ENCODE measurements at regions of chr7 and their contacts with region 1.

Region 1: DNA sequence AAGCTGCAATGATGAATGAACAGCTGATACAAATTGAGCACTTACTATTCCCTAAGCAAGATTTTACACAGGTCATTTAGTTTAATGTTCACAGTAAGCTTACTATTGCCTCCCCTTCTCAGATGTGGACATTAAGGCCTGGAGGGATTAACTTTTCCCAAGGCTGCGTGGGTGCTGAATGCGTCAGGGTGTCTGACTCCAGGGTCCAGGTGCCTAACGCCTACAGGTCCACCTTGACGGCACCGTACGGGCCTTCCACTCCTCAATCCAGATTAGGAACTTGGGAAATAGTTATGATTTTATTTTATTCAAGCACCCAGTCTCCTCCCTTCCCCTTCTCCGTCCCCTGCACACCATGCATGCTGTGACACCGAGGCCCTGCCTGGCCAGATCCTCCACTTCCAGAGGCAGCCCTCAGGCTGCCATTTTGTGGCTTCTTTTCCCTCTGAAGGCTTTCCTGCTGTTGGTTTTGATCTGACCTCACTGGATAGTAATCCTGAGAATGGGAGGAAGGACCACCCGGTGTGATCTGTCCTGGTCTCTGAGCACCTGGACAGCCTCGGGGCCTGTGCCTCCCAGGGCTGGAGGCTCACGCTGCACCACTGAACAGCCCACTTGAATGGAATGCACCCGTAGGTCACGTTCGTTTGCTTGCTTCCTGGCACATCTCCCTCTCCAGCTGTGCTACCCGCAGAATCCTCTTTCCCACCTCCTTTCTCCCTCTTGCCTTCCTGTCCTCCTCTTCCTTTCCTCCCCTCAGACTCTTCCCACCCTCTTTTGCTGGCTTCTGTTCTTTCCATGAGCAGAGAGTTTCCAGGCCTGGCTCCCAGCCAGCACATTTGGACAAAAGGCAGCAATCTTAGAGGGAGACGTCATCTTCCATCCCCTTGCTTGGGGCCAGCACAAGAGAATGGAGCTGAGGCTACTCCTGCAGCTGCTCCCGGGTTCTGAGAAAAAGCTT is 14.4 kb downstream of the DENND2A start:
- DNase-seq: peak; percentile 90
- H3K4me3 ChIP-seq: no peak overlapping the region
- H3K27ac ChIP-seq: peak overlapping the region; percentile 37
- H3K4me1 ChIP-seq: peaks cover 24% of the 10 kb centered on the region
- H3K27me3 ChIP-seq: no peaks in the 10 kb centered on the region
- CTCF ChIP-seq: no peak

Region 2: DNA sequence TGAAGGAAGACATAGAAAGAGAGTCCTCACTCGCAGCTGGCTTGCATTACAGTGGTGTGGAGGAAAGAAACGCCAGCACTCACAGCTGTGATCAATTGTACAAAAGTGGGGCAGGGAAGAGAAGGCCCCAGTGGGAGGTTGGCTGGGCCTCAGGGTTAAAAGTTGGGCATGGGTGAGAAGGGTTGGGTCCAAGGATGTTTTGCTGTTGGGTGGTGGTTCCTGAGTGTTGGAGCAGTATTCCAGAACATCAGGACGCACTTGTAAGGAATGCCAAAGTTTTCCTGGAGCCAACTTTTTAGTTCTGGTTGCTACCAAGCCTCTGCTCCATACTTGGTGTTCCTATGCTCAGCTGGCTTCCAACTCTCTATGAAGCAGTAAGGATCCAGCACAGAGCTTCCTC is 91.4 kb before region 1 on chr7:
- CTCF ChIA-PET with region 1: no interaction called
- dilution Hi-C with region 1: loop called (anchors 5 kb)
- in situ Hi-C with region 1: no loop called
- intact Hi-C with region 1: no loop called
- DNase-seq: no peak
- H3K4me3 ChIP-seq: no peak overlapping the region
- H3K27ac ChIP-seq: no peak overlapping the region
- H3K4me1 ChIP-seq: peaks cover 4% of the 10 kb centered on the region
- H3K27me3 ChIP-seq: no peaks in the 10 kb centered on the region
- CTCF ChIP-seq: no peak

Region 3: DNA sequence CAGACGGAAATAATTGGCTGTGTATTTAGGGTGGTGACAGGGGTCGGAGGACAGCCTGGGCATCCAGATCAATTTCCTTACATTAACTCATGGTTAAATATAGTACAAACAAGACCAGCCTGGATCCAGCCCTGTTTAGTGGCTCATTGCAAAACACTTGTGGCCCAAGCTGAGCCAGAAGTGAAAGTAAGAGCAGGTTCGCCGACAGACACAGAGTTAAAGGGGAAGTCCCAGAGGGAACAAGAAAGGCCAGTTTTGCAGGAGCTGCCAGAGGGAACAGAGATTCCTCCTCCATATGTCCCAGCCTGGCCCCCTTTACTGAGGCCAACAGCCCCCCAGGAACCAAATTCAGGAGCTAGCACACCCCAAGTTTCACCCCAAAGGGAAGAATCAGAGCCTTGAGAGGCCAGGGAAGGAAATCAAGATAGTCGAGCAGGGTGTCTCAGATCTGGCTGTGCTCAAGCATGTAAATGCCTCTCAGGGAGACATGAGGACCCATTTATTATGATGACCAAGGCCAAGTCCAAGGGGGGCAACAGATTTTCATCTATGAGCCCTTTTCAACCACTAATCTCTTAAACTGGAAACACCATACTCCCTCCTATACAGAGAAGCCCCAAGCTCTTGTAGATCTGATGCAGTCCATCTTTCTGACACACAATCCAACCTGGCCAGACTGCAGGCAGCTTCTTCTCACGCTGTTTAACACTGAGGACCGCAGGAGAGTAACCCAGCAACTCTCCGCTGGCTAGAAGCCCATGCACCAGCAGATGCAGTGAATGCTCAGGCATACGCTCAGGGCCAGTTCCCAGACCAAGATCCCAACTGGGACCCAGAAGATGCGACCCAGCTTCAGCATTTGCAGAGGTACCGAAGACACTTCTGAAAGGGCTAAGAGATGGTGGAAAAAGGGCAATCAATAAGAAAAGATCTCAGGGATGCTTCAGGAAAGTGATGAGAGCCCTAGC is 30.6 kb after region 1 on chr7:
- CTCF ChIA-PET with region 1: no interaction called
- dilution Hi-C with region 1: no loop called
- in situ Hi-C with region 1: no loop called
- intact Hi-C with region 1: no loop called
- DNase-seq: peak; percentile 83
- H3K4me3 ChIP-seq: peak overlapping the region; percentile 8 to 37 (median 21)
- H3K27ac ChIP-seq: no peak overlapping the region
- H3K4me1 ChIP-seq: no peaks in the 10 kb centered on the region
- H3K27me3 ChIP-seq: no peaks in the 10 kb centered on the region
- CTCF ChIP-seq: no peak